WTC11 (cell line): ENCODE measurements at regions of chr20 and their contacts with region 1.

Region 1: DNA sequence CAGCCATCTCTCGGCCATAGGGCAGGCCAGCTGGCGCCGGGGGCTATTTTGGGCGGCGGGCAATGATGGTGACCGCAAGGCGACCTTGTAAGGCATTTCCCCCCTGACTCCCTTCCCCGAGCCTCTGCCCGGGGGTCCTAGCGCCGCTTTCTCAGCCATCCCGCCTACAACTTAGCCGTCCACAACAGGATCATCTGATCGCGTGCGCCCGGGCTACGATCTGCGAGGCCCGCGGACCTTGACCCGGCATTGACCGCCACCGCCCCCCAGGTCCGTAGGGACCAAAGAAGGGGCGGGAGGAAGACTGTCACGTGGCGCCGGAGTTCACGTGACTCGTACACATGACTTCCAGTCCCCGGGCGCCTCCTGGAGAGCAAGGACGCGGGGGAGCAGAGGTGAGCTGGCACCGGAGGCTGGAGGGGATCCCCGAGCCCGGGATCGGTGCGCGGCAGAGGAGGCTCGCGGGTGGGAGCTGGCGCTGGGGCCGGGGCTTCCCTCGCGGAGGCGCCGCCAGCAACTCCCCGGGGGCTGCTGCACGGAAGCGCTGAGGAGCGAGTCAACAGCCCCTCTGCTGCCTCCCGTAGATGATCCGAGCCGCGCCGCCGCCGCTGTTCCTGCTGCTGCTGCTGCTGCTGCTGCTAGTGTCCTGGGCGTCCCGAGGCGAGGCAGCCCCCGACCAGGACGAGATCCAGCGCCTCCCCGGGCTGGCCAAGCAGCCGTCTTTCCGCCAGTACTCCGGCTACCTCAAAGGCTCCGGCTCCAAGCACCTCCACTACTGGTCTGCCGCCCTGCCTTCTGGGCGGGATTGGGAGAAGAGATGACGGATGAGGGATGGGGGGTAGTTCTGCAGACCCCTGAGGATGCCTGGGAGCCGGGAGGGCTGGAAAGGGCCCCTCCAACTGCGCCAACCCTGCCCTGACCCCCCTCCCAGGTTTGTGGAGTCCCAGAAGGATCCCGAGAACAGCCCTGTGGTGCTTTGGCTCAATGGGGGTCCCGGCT is at the starts of genes CTSA and NEURL2:
- DNase-seq: peak; percentile 91
- ATAC-seq: peak; percentile 33
- H3K4me3 Mint-ChIP-seq: peak within 1 kb of the TSS; percentile 87
- H3K27ac Mint-ChIP-seq: peak within 1 kb of the TSS; percentile 78; the same call in 1 of the 2 replicates
- H3K4me1 Mint-ChIP-seq: peaks cover 12% of the 10 kb centered on the region
- H3K27me3 Mint-ChIP-seq: no peaks in the 10 kb centered on the region; the same call in 1 of the 2 replicates
- CTCF ChIP-seq: no peak
- total RNA-seq, gene CTSA: 44.2 to 48.3 TPM (median 47.2 TPM) in 3 replicates
- total RNA-seq, gene NEURL2: 6.1 to 8.3 TPM (median 6.6 TPM) in 3 replicates

Region 2: DNA sequence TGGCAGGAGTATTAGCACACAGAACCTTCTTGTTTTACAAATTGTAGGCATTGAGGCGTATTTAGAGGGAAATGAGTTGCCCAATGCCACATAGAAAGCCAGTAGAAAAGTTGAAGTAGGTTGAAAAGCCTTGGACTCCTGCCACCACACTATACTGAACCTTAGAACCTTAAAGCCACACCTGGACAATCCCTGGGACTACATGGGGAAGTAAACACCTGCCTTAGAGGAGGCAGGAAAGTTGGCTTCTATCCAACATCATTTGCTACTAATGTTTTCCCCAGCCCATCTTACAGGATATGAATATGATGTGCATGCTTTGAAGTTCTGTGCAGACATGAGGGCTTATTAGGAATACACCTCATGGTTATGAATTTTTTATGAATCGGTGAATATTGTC is 338.8 kb before region 1 on chr20:
- CTCF ChIA-PET with region 1: no interaction called
- POLR2A ChIA-PET with region 1: no interaction called
- DNase-seq: no peak
- ATAC-seq: no peak
- H3K4me3 Mint-ChIP-seq: no peak overlapping the region
- H3K27ac Mint-ChIP-seq: no peak overlapping the region
- H3K4me1 Mint-ChIP-seq: peaks cover 4% of the 10 kb centered on the region; the same call in 1 of the 2 replicates
- H3K27me3 Mint-ChIP-seq: no peaks in the 10 kb centered on the region; the same call in 1 of the 2 replicates
- CTCF ChIP-seq: no peak

Region 3: GRCh38 chr20:45823949-45824835 is 67.1 kb before region 1 on chr20:
- CTCF ChIA-PET with region 1: interaction called, 30 read pairs
- POLR2A ChIA-PET with region 1: interaction called, 10 read pairs
- DNase-seq: peak; percentile 81
- ATAC-seq: peak; percentile 86
- H3K4me3 Mint-ChIP-seq: peak overlapping the region; percentile 61
- H3K27ac Mint-ChIP-seq: 0 out of 2 replicates have a peak overlapping the region, but pooled peaks have one; percentile 48
- H3K4me1 Mint-ChIP-seq: peaks cover 26% of the 10 kb centered on the region
- H3K27me3 Mint-ChIP-seq: peaks cover 23% of the 10 kb centered on the region
- CTCF ChIP-seq: no peak

Region 4: DNA sequence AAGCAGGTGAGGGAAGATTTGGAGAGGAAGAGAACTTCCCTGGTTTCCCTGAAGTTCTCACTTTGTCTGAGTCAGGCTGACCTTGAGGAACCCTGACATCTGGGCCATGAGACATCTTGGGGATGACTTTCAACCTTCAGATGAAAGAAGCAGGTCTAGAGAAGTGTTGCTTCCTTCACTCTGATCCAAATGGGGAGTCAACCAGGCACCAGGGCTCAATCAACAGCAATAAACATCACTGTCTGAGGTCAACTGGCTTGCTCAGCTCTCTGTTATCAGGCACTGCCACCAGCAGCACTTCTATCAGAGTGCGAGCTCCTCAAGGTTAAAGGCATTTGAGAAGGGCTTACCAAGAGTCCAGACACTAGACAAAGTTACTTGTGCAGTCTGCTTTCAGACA is 40.4 kb before region 1 on chr20:
- CTCF ChIA-PET with region 1: interaction called, 19 read pairs
- POLR2A ChIA-PET with region 1: interaction called, 4 read pairs
- DNase-seq: no peak
- ATAC-seq: no peak
- H3K4me3 Mint-ChIP-seq: no peak overlapping the region
- H3K27ac Mint-ChIP-seq: peak overlapping the region; percentile 84
- H3K4me1 Mint-ChIP-seq: peaks cover 44% of the 10 kb centered on the region
- H3K27me3 Mint-ChIP-seq: no peaks in the 10 kb centered on the region
- CTCF ChIP-seq: no peak

Region 5: DNA sequence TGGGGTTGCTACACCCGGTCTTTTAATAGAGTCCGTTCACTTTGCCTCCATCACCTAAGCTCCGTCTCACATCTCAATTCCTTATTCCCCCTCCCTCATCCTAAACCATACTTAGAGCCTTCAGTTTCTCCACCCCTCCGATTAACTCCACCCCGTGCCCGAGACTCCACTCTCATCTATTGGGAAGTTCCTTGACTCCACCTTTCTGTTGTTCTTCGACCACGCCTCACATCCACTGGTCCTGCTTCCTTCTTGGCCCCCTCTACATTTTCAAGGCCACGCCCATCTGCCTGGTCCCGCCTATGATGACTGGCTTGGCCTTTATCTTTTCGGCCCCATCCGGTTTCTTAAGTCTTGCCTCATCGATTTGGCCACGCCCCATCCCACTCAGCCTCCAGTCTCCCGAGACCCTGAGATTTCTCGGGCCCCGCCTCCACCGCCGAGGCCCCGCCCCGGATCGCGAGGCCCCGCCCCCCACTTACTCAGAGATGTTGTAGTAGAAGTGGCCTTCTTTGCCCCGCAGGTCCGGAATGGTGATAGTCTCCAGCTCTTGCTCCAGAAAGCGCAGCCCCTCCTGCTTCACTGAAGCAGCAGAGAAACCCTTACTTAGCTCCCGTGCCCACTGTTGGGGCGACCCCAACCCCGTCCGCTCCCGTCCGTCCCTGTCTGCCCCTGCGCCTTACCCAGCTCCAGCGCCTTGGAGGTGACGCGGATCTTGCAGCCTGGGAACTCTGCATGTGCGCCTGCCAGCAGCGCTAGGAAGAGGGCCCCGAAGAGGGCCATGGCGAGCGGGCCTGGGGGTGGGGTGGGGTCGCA is 19.6 kb after region 1 on chr20:
- CTCF ChIA-PET with region 1: interaction called, 13 read pairs
- POLR2A ChIA-PET with region 1: interaction called, 8 read pairs
- DNase-seq: peak; percentile 100
- ATAC-seq: peak; percentile 91
- H3K4me3 Mint-ChIP-seq: peak overlapping the region; percentile 85
- H3K27ac Mint-ChIP-seq: peak overlapping the region; percentile 87; the same call in 1 of the 2 replicates
- H3K4me1 Mint-ChIP-seq: peaks cover 14% of the 10 kb centered on the region
- H3K27me3 Mint-ChIP-seq: no peaks in the 10 kb centered on the region
- CTCF ChIP-seq: no peak

Region 6: GRCh38 chr20:45934586-45935415 is 43.5 kb after region 1 on chr20 and contains the start of gene PCIF1:
- CTCF ChIA-PET with region 1: interaction called, 21 read pairs
- POLR2A ChIA-PET with region 1: interaction called, 19 read pairs
- DNase-seq: peak; percentile 98
- ATAC-seq: peak; percentile 63
- H3K4me3 Mint-ChIP-seq: peak within 1 kb of the TSS; percentile 96
- H3K27ac Mint-ChIP-seq: peak within 1 kb of the TSS; percentile 100
- H3K4me1 Mint-ChIP-seq: peaks cover 39% of the 10 kb centered on the region
- H3K27me3 Mint-ChIP-seq: no peaks in the 10 kb centered on the region
- CTCF ChIP-seq: no peak
- total RNA-seq, gene PCIF1: 37.7 to 42.2 TPM (median 39.4 TPM) in 3 replicates

Region 7: DNA sequence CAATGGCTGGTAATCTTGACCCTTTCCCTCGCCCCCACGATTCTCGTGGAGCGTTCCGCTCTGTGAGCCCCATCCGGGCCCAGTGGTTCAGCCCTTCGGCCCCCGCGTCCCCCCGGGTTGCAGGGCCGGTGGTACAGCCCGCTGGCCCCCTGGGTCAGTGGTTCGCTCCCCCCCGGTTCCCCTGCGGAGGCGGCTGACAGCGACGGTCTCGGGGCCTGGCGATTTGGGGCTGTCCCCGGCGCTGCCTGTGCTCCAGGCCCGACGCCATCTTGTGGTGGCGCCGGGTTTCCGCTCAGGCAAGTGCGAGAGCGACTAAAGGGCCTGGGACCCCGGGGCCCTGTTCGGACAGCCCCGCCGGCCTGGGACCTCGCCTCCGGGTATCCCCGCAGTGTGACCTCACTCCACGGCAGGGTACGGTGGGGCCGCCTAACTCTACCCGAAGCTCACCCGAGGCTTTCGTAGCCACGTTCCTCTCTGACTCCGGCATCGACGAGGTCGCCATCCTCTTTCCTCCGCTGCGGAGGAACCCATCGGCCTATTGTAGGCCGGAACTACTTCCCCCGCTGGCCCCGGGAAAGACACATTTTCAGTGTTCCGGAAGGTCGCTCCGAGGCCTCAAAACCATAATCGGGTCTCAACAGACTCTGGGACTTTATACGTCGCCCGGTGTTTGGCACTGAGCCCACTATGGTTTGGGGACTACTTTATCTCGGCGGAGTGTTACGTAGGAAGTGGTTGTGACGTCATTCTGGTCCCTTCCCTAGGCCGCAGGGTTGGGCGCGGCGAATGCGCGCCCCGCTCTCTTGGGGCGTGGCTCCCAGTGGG is 80.6 kb after region 1 on chr20 and contains the start of gene ZNF335:
- CTCF ChIA-PET with region 1: interaction called, 16 read pairs
- POLR2A ChIA-PET with region 1: no interaction called
- DNase-seq: peak; percentile 94
- ATAC-seq: peak; percentile 85
- H3K4me3 Mint-ChIP-seq: peak within 1 kb of the TSS; percentile 84
- H3K27ac Mint-ChIP-seq: peak within 1 kb of the TSS; percentile 98
- H3K4me1 Mint-ChIP-seq: peaks cover 14% of the 10 kb centered on the region
- H3K27me3 Mint-ChIP-seq: no peaks in the 10 kb centered on the region; the same call in 1 of the 2 replicates
- CTCF ChIP-seq: no peak
- total RNA-seq, gene ZNF335: 16.3 to 20.0 TPM (median 16.4 TPM) in 3 replicates